ENCODE measurements at regions of chr16 and their contacts with region 1.

Region 1: DNA sequence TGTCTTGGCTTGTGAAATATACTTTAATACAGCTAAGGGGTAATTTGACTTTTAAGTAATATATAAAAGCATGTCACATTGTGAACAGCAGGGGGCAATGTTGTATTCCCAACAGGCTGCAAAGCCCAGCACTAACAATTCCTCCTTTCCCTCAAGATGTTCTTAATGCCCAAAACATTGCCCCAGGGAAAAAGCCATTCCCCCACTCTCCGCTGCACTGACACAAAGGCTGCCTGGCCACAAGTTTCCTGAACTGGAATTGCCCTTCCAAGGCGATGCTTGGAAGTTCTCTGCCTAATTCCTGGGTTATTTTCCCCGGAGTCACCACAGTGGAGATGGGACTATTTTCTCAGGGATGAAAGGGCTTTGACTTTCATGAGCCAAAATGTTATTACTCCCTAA is 27.2 kb downstream of the CLEC16A start:
- DNase-seq: peak; percentile 62
- H3K4me3 Mint-ChIP-seq: no peak overlapping the region
- H3K27ac Mint-ChIP-seq: no peak overlapping the region
- H3K4me1 Mint-ChIP-seq: peaks cover 22% of the 10 kb centered on the region
- H3K27me3 Mint-ChIP-seq: no peaks in the 10 kb centered on the region

Region 2: DNA sequence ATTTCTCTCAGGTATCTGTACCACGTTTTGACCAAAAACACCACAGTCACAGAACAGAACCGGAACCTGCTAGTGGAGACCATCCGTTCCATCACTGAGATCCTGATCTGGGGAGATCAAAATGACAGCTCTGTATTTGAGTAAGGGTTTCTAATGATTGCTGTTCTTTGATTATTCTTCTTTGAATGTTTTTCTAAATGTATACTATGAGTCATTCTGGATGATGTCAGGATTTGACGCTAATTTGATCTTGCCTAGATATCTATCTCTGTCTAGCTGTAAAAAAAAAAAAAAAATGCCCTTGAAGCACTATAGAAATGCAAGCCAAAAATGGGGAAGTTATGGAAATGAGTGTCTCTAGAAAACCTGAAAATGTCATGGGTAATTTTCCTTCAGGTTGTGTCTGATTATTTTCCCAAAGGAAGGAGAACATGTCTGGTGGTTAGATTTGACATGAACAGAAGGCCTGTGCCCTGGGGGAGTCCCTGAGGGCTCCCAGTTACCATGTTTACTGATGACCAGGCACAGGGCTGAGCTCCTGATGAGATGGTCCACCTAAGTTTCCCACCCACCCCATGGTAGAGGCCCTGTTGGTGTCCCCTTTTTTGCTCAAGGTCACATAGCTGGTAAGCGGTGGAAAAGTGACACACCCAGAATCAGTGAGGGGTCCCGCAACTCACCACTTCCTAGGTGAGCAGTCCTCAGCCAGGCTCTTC is 13.6 kb before region 1 on chr16:
- CTCF ChIA-PET with region 1: interaction called, 11 read pairs
- intact Hi-C with region 1: loop called (anchors 2 kb)
- DNase-seq: peak; percentile 57
- H3K4me3 Mint-ChIP-seq: no peak overlapping the region
- H3K27ac Mint-ChIP-seq: peak overlapping the region; percentile 82
- H3K4me1 Mint-ChIP-seq: peaks cover 37% of the 10 kb centered on the region
- H3K27me3 Mint-ChIP-seq: no peaks in the 10 kb centered on the region

Region 3: GRCh38 chr16:10981697-10982216 is 10.2 kb after region 1 on chr16:
- CTCF ChIA-PET with region 1: interaction called, 38 read pairs
- intact Hi-C with region 1: loop called (anchors 1 kb)
- DNase-seq: peak; percentile 76
- H3K4me3 Mint-ChIP-seq: no peak overlapping the region
- H3K27ac Mint-ChIP-seq: no peak overlapping the region
- H3K4me1 Mint-ChIP-seq: peaks cover 36% of the 10 kb centered on the region
- H3K27me3 Mint-ChIP-seq: no peaks in the 10 kb centered on the region

Region 4: GRCh38 chr16:11370084-11370931 is 398.7 kb after region 1 on chr16:
- CTCF ChIA-PET with region 1: interaction called, 20 read pairs
- intact Hi-C with region 1: no loop called
- DNase-seq: peak; percentile 42
- H3K4me3 Mint-ChIP-seq: no peak overlapping the region
- H3K27ac Mint-ChIP-seq: no peak overlapping the region
- H3K4me1 Mint-ChIP-seq: peaks cover 11% of the 10 kb centered on the region
- H3K27me3 Mint-ChIP-seq: no peaks in the 10 kb centered on the region